ENCODE measurements at regions of chr4 and their contacts with region 1.

Region 1: GRCh38 chr4:79514621-79515329 is 106.7 kb upstream of the GK2 start:
- DNase-seq: no peak
- H3K4me3 Mint-ChIP-seq: no peak overlapping the region
- H3K27ac Mint-ChIP-seq: no peak overlapping the region
- H3K4me1 Mint-ChIP-seq: no peaks in the 10 kb centered on the region
- H3K27me3 Mint-ChIP-seq: peaks cover 3% of the 10 kb centered on the region

Region 2: GRCh38 chr4:79979785-79980437 is 465.1 kb after region 1 on chr4:
- intact Hi-C with region 1: loop called (anchors 5 kb)
- DNase-seq: no peak
- H3K4me3 Mint-ChIP-seq: no peak overlapping the region
- H3K27ac Mint-ChIP-seq: no peak overlapping the region
- H3K4me1 Mint-ChIP-seq: peaks cover 1% of the 10 kb centered on the region
- H3K27me3 Mint-ChIP-seq: no peaks in the 10 kb centered on the region